H1 (cell line): ENCODE measurements at regions of chr4 and their contacts with region 1.

Region 1: DNA sequence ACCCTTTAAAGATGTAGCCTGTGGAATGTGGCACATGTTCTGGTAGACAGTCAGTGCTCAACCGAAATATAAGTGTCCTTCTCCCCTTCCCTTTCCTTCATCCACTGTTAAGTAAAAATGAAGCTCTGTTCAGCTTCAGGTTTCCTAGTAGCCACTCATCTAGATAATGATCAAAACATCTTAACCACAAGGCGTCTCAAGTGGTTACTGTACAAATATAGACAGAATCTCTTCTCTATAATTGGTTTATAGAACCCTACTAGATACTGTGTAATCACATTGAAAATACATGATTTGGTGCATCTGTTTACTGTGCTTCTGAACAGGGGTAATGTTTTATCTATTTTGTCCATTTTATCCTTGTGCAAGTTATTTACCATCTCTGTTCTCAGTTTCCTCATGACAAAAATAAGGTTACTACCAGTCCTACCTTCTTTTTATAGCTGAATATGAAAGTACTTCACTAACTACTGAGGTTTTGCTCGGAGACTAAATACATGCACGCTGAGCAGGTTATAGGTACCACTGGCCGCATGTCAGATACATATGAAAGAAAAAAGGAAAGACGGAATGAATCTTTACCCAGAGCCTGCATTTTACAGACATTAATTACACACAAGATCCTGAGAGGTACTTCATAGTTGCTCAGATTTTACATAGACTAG is 20.3 kb upstream of the SLC25A4 start:
- DNase-seq: no peak
- H3K4me3 ChIP-seq: no peak overlapping the region
- H3K27ac ChIP-seq: no peak overlapping the region
- H3K4me1 ChIP-seq: peaks cover 0 to 15% (median 6%) of the 10 kb centered on the region in 4 experiments
- H3K27me3 ChIP-seq: peaks cover 0 to 10% (median 9%) of the 10 kb centered on the region in 4 experiments; a peak in 6 of 7 replicates
- CTCF ChIP-seq: no peak
- EP300 ChIP-seq: no peak
- POLR2A ChIP-seq: no peak
- RAD21 ChIP-seq: no peak

Region 2: GRCh38 chr4:185108669-185109068 is 14.1 kb before region 1 on chr4:
- CTCF ChIA-PET with region 1: interaction called, 12 read pairs
- POLR2A ChIA-PET with region 1: interaction called, 9 read pairs
- DNase-seq: no peak
- H3K4me3 ChIP-seq: peak overlapping the region in 1 of 4 experiments; percentile 28; a peak in 1 of 8 replicates
- H3K27ac ChIP-seq: peak overlapping the region; percentile 37; the same call in 1 of the 2 replicates
- H3K4me1 ChIP-seq: peaks cover 6 to 26% (median 13%) of the 10 kb centered on the region in 4 experiments
- H3K27me3 ChIP-seq: no peaks in the 10 kb centered on the region
- CTCF ChIP-seq: no peak
- EP300 ChIP-seq: no peak
- POLR2A ChIP-seq: no peak
- RAD21 ChIP-seq: no peak